Endothelial cell of umbilical vein (primary cell): ENCODE measurements at regions of chr6 and their contacts with region 1.

Region 1: DNA sequence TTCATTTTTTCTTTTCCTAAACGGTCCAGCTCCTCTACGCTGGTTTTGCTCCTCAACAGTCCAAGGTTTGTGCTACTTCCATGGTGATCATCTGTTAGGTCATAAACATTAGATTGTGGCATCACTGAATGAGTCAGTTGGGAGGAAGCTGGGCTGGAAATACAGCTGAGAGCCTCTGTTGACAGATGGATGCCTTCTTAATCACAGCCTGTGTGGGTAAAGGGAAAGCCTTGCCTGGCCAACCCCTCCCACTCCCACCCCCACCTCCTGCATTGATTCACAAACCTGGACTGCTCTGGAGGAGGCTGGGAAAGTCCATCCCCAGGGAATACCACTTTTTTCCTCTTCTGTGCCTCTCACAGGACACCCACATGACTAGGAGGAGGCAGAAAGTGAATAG is 180.6 kb upstream of the CCN2 start:
- DNase-seq: peak; percentile 99
- H3K4me3 ChIP-seq: peak overlapping the region in 1 of 3 experiments; percentile 95
- H3K27ac ChIP-seq: peak overlapping the region; percentile 100
- H3K4me1 ChIP-seq: peaks cover 54% of the 10 kb centered on the region
- H3K27me3 ChIP-seq: no peaks in the 10 kb centered on the region
- CTCF ChIP-seq: no peak
- POLR2A ChIP-seq: no peak

Region 2: GRCh38 chr6:131960371-131961133 is 171.2 kb before region 1 on chr6:
- CTCF ChIA-PET with region 1: interaction called, 17 read pairs
- POLR2A ChIA-PET with region 1: no interaction called
- dilution Hi-C with region 1: no loop called
- intact Hi-C with region 1: no loop called
- DNase-seq: peak; percentile 76
- H3K4me3 ChIP-seq: no peak overlapping the region
- H3K27ac ChIP-seq: peak overlapping the region; percentile 19
- H3K4me1 ChIP-seq: peaks cover 11% of the 10 kb centered on the region
- H3K27me3 ChIP-seq: no peaks in the 10 kb centered on the region
- CTCF ChIP-seq: peak in 1 of 2 donors; percentile 12
- POLR2A ChIP-seq: no peak

Region 3: GRCh38 chr6:131979515-131980337 is 152.0 kb before region 1 on chr6:
- CTCF ChIA-PET with region 1: interaction called, 3 read pairs
- POLR2A ChIA-PET with region 1: interaction called, 4 read pairs
- dilution Hi-C with region 1: no loop called
- intact Hi-C with region 1: loop called (anchors 1 kb)
- DNase-seq: peak; percentile 95
- H3K4me3 ChIP-seq: no peak overlapping the region
- H3K27ac ChIP-seq: peak overlapping the region; percentile 74
- H3K4me1 ChIP-seq: peaks cover 37% of the 10 kb centered on the region
- H3K27me3 ChIP-seq: no peaks in the 10 kb centered on the region
- CTCF ChIP-seq: no peak
- POLR2A ChIP-seq: no peak

Region 4: GRCh38 chr6:132161283-132161682 is 29.5 kb after region 1 on chr6:
- CTCF ChIA-PET with region 1: no interaction called
- POLR2A ChIA-PET with region 1: no interaction called
- dilution Hi-C with region 1: no loop called
- intact Hi-C with region 1: loop called (anchors 1 kb)
- DNase-seq: peak; percentile 70
- H3K4me3 ChIP-seq: no peak overlapping the region
- H3K27ac ChIP-seq: peak overlapping the region; percentile 5
- H3K4me1 ChIP-seq: peaks cover 7% of the 10 kb centered on the region
- H3K27me3 ChIP-seq: no peaks in the 10 kb centered on the region
- CTCF ChIP-seq: peak; percentile 34 to 41
- POLR2A ChIP-seq: no peak

Region 5: GRCh38 chr6:132333639-132334520 is 202.1 kb after region 1 on chr6:
- CTCF ChIA-PET with region 1: no interaction called
- POLR2A ChIA-PET with region 1: no interaction called
- dilution Hi-C with region 1: no loop called
- intact Hi-C with region 1: no loop called
- DNase-seq: peak; percentile 41
- H3K4me3 ChIP-seq: no peak overlapping the region
- H3K27ac ChIP-seq: no peak overlapping the region
- H3K4me1 ChIP-seq: peaks cover 3% of the 10 kb centered on the region
- H3K27me3 ChIP-seq: peaks cover 9 to 10% of the 10 kb centered on the region in 2 experiments
- CTCF ChIP-seq: no peak
- POLR2A ChIP-seq: no peak

Region 6: DNA sequence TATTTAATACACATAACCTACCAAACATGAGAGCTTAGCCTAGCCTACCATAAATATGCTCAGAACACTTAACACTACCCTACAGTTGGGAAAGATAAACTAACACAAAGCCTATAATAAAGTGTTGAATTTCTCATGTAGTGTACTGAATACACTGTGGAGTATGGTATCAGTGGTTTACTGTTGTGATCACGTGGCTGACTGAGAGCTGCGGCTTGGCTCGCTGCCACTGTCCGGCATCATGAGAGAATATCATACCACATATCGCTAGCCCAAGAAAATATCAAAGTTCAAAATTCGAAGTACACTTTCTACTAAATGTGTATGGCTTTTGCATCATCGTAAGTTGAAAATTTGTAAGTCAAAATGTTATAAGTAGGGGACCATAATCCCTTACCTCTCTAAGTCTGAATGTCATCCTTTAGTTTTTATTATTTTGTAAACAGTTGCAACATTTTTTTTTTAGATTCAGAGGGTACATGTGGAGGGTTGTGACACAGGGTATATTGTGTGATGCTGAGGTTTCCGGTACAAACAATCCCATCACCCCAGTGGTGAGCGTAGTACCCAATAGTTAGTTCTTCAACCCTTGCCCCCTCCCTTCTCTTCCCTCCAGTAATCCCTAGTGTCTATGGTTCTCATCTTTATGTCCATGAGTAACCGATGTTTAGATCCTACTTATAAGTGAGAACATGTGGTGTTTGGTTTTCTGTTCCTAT is 541.8 kb after region 1 on chr6:
- CTCF ChIA-PET with region 1: no interaction called
- POLR2A ChIA-PET with region 1: no interaction called
- dilution Hi-C with region 1: no loop called
- intact Hi-C with region 1: no loop called
- DNase-seq: no peak
- H3K4me3 ChIP-seq: no peak overlapping the region
- H3K27ac ChIP-seq: no peak overlapping the region
- H3K4me1 ChIP-seq: peaks cover 2% of the 10 kb centered on the region
- H3K27me3 ChIP-seq: no peaks in the 10 kb centered on the region
- CTCF ChIP-seq: no peak
- POLR2A ChIP-seq: no peak